Calu3 (cell line): ENCODE measurements at regions of chr1 and their contacts with region 1.

Region 1: GRCh38 chr1:152110860-152111514 is 4.3 kb downstream of the TCHH start:
- DNase-seq: peak; percentile 48
- H3K4me3 Mint-ChIP-seq: no peak overlapping the region
- H3K27ac Mint-ChIP-seq: no peak overlapping the region
- H3K4me1 Mint-ChIP-seq: peaks cover 13% of the 10 kb centered on the region
- H3K27me3 Mint-ChIP-seq: peaks cover 18% of the 10 kb centered on the region
- CTCF ChIP-seq: no peak

Region 2: DNA sequence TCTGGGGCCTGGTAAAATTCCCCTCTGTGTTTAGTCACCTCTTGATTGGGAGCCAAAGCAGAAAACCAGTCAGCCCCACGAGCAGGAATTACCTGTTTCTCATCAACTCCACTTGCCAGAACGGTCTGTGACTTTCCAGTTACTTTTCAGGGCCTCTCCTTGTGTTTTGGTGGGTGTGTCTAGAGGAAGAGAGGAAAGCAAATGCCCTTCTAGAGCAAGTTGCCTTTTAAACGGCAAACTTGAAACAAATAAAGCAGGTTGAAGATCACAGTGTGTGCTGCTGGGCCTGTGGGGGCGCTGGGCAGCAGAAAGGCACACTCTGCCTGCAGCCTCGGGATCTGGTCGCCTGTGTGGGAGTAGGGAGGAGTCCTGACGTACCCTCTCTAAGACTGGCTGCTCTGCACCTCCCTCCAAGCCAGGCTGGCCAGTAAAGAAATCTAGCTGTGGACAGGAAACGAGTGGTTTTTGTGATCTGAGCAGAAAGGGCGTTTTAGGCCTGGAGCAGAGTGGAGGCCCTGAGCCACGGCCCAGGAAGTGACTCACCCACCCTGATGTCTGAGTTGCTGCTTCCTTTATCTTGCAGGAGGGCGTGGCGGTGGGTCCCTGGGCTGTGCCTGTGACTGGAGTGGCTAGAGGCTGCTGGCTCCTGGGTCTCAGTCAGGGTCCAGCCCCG is 63.1 kb before region 1 on chr1:
- CTCF ChIA-PET with region 1: interaction called, 6 read pairs
- intact Hi-C with region 1: loop called (anchors 2 kb)
- DNase-seq: peak; percentile 96
- H3K4me3 Mint-ChIP-seq: peak overlapping the region; percentile 48
- H3K27ac Mint-ChIP-seq: peak overlapping the region; percentile 84
- H3K4me1 Mint-ChIP-seq: peaks cover 41% of the 10 kb centered on the region
- H3K27me3 Mint-ChIP-seq: peaks cover 4% of the 10 kb centered on the region
- CTCF ChIP-seq: no peak

Region 3: GRCh38 chr1:153288634-153289275 is 1177.8 kb after region 1 on chr1:
- CTCF ChIA-PET with region 1: interaction called, 12 read pairs
- intact Hi-C with region 1: no loop called
- DNase-seq: peak; percentile 60
- H3K4me3 Mint-ChIP-seq: no peak overlapping the region
- H3K27ac Mint-ChIP-seq: no peak overlapping the region
- H3K4me1 Mint-ChIP-seq: no peaks in the 10 kb centered on the region
- H3K27me3 Mint-ChIP-seq: peaks cover 45% of the 10 kb centered on the region
- CTCF ChIP-seq: peak; percentile 76